CD4-positive, alpha-beta memory T cell (primary cell): ENCODE measurements at regions of chr5 and their contacts with region 1.

Region 1: DNA sequence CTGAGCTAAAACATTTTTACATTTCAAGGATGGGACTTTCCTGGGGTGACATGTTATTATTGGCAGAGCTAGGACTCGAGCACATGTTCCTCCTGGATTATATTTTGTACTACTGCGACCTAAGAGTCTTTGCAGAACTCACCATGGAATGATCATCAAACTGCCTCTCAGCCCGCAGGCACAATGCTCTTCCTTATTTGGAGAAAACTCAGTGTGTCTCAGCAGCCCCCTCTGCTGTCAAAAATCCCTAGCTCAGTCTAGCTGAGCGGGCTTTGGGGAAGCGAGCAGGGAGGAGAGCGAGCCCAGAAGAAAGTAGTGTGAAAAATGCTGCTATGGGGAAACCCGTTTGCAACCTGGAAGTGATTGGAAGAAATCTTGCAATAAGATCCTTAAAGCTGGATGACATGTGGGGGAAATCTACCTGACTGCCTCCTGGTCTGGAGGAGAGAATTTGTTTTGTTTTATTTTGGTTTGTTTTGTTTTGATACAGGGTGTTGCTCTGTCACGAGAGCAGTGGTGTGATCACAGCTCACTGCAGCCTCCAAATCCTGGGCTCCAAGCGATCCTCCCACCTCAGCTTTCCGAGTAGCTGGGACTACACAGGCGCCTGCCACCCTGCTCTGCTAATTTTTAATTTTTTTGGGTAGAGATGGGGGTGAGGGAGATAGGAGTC is 89.9 kb upstream of the CLINT1 start:
- DNase-seq: peak; percentile 63 to 75 (median 68)
- H3K4me3 ChIP-seq: no peak overlapping the region
- H3K4me3 Mint-ChIP-seq: peak overlapping the region in 3 of 8 donors; percentile 1 to 11 (median 5)
- H3K27ac ChIP-seq: no peak overlapping the region
- H3K27ac Mint-ChIP-seq: no peak overlapping the region
- H3K4me1 ChIP-seq: no peaks in the 10 kb centered on the region
- H3K4me1 Mint-ChIP-seq: peaks cover 4 to 6% (median 5%) of the 10 kb centered on the region in 4 donors
- H3K27me3 ChIP-seq: no peaks in the 10 kb centered on the region
- H3K27me3 Mint-ChIP-seq: peaks cover 10 to 12% of the 10 kb centered on the region in 2 donors

Region 2: GRCh38 chr5:157761690-157762621 is 186.9 kb before region 1 on chr5:
- CTCF ChIA-PET with region 1: interaction called, 31 read pairs
- POLR2A ChIA-PET with region 1: no interaction called
- intact Hi-C with region 1: no loop called
- DNase-seq: peak in 4 of 5 donors; percentile 29 to 46 (median 41)
- H3K4me3 ChIP-seq: no peak overlapping the region
- H3K4me3 Mint-ChIP-seq: no peak overlapping the region
- H3K27ac ChIP-seq: no peak overlapping the region
- H3K27ac Mint-ChIP-seq: no peak overlapping the region
- H3K4me1 ChIP-seq: peaks cover 5% of the 10 kb centered on the region
- H3K4me1 Mint-ChIP-seq: peaks cover 0 to 4% (median 0%) of the 10 kb centered on the region in 4 donors
- H3K27me3 ChIP-seq: no peaks in the 10 kb centered on the region
- H3K27me3 Mint-ChIP-seq: no peaks in the 10 kb centered on the region

Region 3: DNA sequence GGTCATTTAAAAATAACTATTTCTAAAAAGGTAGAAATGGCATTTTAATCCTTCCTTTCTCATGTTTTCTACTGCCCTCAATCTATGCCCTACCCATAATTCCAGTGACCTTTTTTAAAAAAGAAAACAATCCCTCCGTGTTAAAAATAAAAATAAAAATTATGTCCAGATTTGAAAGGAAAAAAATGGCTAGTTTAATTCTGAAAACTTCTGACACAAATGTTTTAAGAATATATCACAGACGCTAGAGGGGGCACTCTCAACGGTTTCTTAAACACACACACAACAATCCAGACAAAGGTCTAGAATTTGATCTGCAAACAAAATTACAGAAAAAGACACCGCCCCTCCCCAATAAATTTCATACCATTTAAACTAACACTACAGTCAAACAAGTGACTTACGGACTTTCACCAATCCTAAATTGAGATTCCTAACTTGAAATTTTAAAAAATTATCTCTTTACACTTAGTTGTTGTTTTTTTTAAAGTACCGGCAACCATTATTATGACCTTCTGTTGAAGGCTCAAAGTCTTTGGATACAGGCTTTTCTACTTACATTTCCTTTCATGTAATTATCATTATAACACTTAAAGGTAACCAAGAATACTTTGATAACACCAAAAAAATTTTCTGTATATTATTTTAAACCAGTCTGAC is 128.2 kb before region 1 on chr5:
- CTCF ChIA-PET with region 1: interaction called, 95 read pairs
- POLR2A ChIA-PET with region 1: interaction called, 7 read pairs
- intact Hi-C with region 1: loop called (anchors 1 kb)
- DNase-seq: peak in 4 of 5 donors; percentile 23 to 28 (median 27)
- H3K4me3 ChIP-seq: no peak overlapping the region
- H3K4me3 Mint-ChIP-seq: peak overlapping the region in 1 of 8 donors; percentile 28
- H3K27ac ChIP-seq: no peak overlapping the region
- H3K27ac Mint-ChIP-seq: peak overlapping the region in 5 of 7 donors; percentile 14 to 73 (median 61)
- H3K4me1 ChIP-seq: peaks cover 9% of the 10 kb centered on the region
- H3K4me1 Mint-ChIP-seq: peaks cover 23 to 41% (median 33%) of the 10 kb centered on the region in 4 donors
- H3K27me3 ChIP-seq: no peaks in the 10 kb centered on the region
- H3K27me3 Mint-ChIP-seq: no peaks in the 10 kb centered on the region

Region 4: GRCh38 chr5:157858527-157859226 is 90.2 kb before region 1 on chr5 and contains the start of gene CLINT1:
- CTCF ChIA-PET with region 1: interaction called, 20 read pairs
- POLR2A ChIA-PET with region 1: no interaction called
- intact Hi-C with region 1: loop called (anchors 1 kb)
- DNase-seq: peak; percentile 81 to 88 (median 85)
- H3K4me3 ChIP-seq: peak within 1 kb of the TSS; percentile 54 to 82
- H3K4me3 Mint-ChIP-seq: peak within 1 kb of the TSS; percentile 94 to 99 (median 95)
- H3K27ac ChIP-seq: peak within 1 kb of the TSS; percentile 85
- H3K27ac Mint-ChIP-seq: peak within 1 kb of the TSS; percentile 94 to 99 (median 97)
- H3K4me1 ChIP-seq: peaks cover 59% of the 10 kb centered on the region
- H3K4me1 Mint-ChIP-seq: peaks cover 49 to 74% (median 60%) of the 10 kb centered on the region in 4 donors
- H3K27me3 ChIP-seq: no peaks in the 10 kb centered on the region
- H3K27me3 Mint-ChIP-seq: no peaks in the 10 kb centered on the region
- total RNA-seq, gene CLINT1: 70.5 to 73.9 TPM

Region 5: DNA sequence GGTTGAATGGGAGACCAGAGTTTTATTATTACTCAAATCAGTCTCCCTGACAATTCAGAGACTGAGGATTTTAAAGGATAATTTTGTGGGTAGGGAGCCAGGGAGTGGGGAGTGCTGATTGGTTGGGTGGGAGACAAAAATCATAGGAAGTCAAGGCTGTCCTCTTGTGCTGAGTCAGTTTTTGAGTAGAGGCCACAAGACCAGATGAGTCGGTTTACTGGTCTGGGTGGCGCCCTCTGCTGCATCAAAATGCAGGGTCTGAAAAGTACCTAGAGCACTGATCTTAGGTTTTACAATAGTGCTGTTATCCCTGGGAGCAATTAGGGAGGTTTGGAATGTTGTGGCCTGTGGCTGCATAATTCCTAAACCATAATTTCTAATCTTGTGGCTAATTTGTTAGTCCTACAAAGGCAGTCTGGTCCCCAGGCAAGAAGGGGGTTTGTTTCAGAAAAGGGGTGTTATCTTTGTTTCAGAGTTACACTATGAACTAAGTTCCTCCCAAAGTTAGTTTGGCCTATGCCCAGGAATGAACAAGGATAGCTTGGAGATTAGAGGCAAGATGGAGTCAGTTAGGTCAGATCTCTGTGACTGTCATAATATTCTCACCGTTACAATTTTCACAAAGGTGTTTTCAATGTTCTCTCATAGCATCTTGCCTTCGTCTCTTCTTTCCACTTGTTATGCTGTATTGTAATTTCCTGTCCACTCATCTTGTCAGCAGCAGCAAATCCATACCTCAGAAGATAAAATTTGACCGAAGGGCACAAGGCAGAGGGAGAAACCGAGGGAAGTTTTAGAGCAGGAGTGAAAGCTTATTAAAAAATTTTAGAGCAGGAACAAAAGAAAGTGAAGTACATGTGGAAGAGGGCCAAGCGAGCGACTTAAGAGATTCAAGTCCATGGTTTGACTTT is 30.7 kb before region 1 on chr5:
- CTCF ChIA-PET with region 1: interaction called, 11 read pairs
- POLR2A ChIA-PET with region 1: no interaction called
- intact Hi-C with region 1: loop called (anchors 2 kb)
- DNase-seq: peak; percentile 26 to 52 (median 41)
- H3K4me3 ChIP-seq: no peak overlapping the region
- H3K4me3 Mint-ChIP-seq: peak overlapping the region in 5 of 8 donors; percentile 39 to 81 (median 63)
- H3K27ac ChIP-seq: no peak overlapping the region
- H3K27ac Mint-ChIP-seq: peak overlapping the region in 6 of 7 donors; percentile 46 to 94 (median 49)
- H3K4me1 ChIP-seq: peaks cover 23% of the 10 kb centered on the region
- H3K4me1 Mint-ChIP-seq: peaks cover 22 to 28% (median 27%) of the 10 kb centered on the region in 4 donors
- H3K27me3 ChIP-seq: no peaks in the 10 kb centered on the region
- H3K27me3 Mint-ChIP-seq: no peaks in the 10 kb centered on the region

Region 6: DNA sequence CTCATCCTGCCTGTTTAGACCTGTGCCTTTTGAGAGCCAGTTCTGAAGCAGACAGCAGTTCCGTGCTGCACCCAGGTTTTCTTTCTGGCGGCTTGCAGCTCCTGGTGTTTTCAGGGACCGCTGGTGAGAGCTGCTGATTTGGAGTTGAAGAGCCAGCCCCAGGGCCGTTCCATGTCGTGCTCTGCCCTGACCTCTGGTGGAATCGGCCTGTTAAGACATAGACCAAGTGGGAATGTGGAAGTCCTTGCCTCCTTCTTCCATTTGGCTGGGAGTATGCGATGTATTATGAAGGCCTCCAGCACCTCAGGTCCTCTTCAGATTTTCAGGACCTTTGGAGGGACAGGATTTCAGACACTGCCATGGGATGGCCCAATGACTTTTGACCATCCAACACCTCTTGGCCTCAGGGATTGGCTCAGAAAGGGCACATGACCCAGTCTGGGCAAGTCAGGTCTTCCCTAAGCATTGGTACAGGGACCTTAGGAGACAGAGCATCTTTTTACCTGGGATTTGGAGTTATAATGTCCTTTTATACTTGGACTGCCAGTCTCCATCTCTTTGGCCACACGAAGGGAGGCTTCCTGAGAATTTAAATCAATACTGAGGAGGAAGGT is 46.1 kb after region 1 on chr5:
- CTCF ChIA-PET with region 1: interaction called, 20 read pairs
- POLR2A ChIA-PET with region 1: no interaction called
- intact Hi-C with region 1: no loop called
- DNase-seq: peak; percentile 31 to 40 (median 34)
- H3K4me3 ChIP-seq: peak overlapping the region; percentile 2 to 15
- H3K4me3 Mint-ChIP-seq: peak overlapping the region; percentile 66 to 84 (median 76)
- H3K27ac ChIP-seq: no peak overlapping the region
- H3K27ac Mint-ChIP-seq: peak overlapping the region in 2 of 7 donors; percentile 11 to 76
- H3K4me1 ChIP-seq: peaks cover 26% of the 10 kb centered on the region
- H3K4me1 Mint-ChIP-seq: peaks cover 16 to 33% (median 21%) of the 10 kb centered on the region in 4 donors
- H3K27me3 ChIP-seq: peaks cover 14% of the 10 kb centered on the region
- H3K27me3 Mint-ChIP-seq: peaks cover 26 to 28% of the 10 kb centered on the region in 2 donors